ENCODE measurements at regions of chr2 and their contacts with region 1.

Region 1: GRCh38 chr2:68282811-68283418 is 30.6 kb upstream of the PPP3R1 start:
- DNase-seq: no peak
- H3K4me3 ChIP-seq: no peak overlapping the region
- H3K27ac ChIP-seq: no peak overlapping the region
- H3K4me1 ChIP-seq: peaks cover 0 to 5% (median 2%) of the 10 kb centered on the region in 4 donors
- H3K27me3 ChIP-seq: no peaks in the 10 kb centered on the region
- CTCF ChIP-seq: peak; percentile 65 to 67

Region 2: DNA sequence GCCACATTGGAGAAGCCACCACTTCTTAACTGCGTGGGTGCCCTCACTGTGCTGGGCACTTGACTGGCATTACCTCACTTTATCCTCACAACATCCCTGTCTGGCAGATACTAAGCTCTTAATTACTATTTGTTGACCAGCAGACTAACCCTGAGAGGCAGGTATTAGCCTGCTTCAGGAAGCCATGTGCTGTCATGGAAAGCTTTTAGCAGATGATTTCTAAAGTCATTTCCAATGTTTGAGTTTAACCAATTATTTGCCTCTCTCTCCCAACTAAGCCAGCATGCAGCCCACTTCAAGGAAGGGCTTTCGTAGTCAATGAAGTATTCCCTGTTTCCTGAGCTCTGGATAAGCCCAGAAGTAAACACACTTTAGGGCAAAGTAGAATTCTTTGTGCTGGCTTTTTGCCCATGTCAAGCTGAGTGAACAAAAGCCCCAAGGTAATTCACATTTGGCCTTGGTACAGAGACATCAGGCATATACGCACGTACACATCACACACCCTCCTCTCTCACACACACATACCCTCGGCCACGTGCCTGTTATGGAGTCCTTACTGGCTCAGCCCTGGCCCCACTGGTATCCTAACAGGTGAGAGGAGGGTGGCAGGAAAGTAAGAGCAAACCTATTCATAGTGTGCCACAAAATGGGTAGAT is 328.7 kb before region 1 on chr2:
- intact Hi-C with region 1: no loop called
- DNase-seq: no peak
- H3K4me3 ChIP-seq: no peak overlapping the region
- H3K27ac ChIP-seq: no peak overlapping the region
- H3K4me1 ChIP-seq: no peaks in the 10 kb centered on the region
- H3K27me3 ChIP-seq: no peaks in the 10 kb centered on the region
- CTCF ChIP-seq: no peak

Region 3: DNA sequence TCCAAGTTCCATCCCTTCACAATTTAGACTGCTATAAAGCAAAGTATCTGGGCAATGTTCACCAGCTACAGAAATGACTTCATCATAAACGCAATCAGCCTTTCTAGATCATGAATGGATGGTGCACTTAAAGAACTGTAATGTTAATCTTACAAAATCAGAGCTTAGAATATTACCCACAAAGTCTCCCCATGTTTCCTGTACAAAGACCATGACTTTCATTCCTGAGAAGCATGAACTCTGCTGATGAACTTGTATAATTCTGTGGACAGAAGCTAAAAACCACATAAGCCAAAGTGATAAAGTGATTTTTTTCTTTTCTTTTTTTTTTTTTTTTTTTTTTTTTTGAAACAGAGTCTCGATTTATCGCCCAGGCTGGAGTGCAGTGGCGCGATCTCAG is 273.4 kb before region 1 on chr2:
- intact Hi-C with region 1: no loop called
- DNase-seq: no peak
- H3K4me3 ChIP-seq: no peak overlapping the region
- H3K27ac ChIP-seq: no peak overlapping the region
- H3K4me1 ChIP-seq: no peaks in the 10 kb centered on the region
- H3K27me3 ChIP-seq: no peaks in the 10 kb centered on the region
- CTCF ChIP-seq: no peak

Region 4: DNA sequence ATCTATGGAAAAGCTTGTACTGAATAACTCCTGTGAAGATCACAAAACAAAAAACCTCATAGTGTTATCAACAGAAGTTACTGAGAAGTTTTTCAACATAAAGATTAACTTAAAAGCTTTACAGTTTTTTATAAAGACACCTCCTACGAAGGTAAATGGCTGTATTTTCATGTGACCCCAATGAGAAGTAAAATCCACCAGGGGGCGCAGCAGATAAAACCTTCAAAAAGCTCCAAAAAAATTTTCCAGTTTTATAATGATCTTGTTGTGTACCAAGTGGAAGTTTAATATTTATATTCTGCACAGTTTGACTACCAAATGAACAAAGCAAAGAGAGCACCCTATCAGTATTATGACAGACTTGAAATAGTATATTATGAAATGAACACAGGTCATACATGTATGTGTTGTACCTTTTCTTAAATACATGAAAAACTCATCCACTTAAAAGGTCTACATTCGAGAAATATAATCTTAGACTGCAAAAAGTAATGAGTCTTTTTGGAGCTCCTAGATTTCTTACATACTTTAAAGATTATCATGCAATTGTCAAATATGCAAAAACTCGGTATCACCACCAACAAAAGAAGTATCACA is 86.7 kb before region 1 on chr2:
- intact Hi-C with region 1: loop called (anchors 10 kb)
- DNase-seq: peak in 1 of 2 donors; percentile 29
- H3K4me3 ChIP-seq: no peak overlapping the region
- H3K27ac ChIP-seq: no peak overlapping the region
- H3K4me1 ChIP-seq: peaks cover 0 to 46% (median 13%) of the 10 kb centered on the region in 4 donors
- H3K27me3 ChIP-seq: no peaks in the 10 kb centered on the region
- CTCF ChIP-seq: peak; percentile 62 to 63

Region 5: GRCh38 chr2:68709421-68709911 is 426.6 kb after region 1 on chr2:
- intact Hi-C with region 1: no loop called
- DNase-seq: no peak
- H3K4me3 ChIP-seq: no peak overlapping the region
- H3K27ac ChIP-seq: no peak overlapping the region
- H3K4me1 ChIP-seq: peaks cover 0 to 5% (median 0%) of the 10 kb centered on the region in 4 donors
- H3K27me3 ChIP-seq: no peaks in the 10 kb centered on the region
- CTCF ChIP-seq: peak; percentile 57 to 69

Measured in tibial artery (tissue), 4 donors.